Activated T-helper 1 cell treated with anti-CD3 and anti-CD28 coated beads, Interleukin-12 subunit alpha, Interleukin-12 subunit beta, Interleukin-2, Interleukin-4 antibody, amounts not matched to agents 30 ng/mL and 10 ng/mL and 1 ng/mL, durations not matched to agents 14 hours and 24 hours and 36 hours (primary cell): ENCODE measurements at regions of chr22 and their contacts with region 1.

Region 1: DNA sequence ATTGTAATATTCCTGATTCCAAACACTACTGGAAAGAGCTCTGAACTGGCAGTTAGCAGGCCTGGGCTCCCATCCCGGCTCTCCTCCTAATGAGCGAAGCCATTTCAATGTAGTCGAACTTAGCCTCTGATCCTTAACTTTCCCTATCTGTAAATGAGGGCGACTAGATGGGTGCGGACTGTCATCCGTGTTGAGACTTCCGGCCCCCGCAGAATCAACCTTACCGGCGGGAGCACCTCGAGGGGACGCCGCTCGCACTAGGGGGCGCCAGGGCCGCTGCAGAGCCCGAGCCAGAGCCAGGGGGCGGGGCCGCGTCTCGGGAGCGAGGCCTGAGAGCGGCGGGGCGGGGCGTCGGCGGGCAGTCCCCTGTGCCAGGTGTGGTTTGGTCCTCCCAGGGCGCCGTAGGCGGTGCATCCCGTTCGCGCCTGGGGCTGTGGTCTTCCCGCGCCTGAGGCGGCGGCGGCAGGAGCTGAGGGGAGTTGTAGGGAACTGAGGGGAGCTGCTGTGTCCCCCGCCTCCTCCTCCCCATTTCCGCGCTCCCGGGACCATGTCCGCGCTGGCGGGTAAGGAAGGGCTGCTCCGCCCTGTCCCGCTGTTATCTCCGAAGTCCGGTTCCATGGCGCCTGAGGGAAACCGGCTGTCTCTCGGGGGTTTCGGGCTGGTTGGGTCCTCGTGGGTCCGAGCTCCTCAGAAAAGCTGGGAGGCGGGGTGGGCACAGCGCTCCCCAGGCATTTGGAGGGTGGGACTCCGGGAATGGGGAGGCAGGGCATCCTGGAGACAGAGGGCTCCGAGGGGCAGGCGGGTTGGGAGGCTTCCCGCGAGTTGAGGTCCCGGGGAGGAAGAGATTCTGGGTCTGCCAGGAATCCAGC is at the start of gene LIMK2:
- DNase-seq: peak; percentile 95
- H3K4me3 Mint-ChIP-seq: peak within 1 kb of the TSS; percentile 89
- H3K27ac Mint-ChIP-seq: peak within 1 kb of the TSS; percentile 83
- H3K4me1 Mint-ChIP-seq: peaks cover 54% of the 10 kb centered on the region
- H3K27me3 Mint-ChIP-seq: no peaks in the 10 kb centered on the region
- total RNA-seq, gene LIMK2: 39.8 and 40.7 TPM in 2 replicates

Region 2: GRCh38 chr22:30667494-30668385 is 544.4 kb before region 1 on chr22 and contains the start of gene DUSP18:
- intact Hi-C with region 1: loop called (anchors 10 kb)
- DNase-seq: peak; percentile 92
- H3K4me3 Mint-ChIP-seq: peak within 1 kb of the TSS; percentile 93
- H3K27ac Mint-ChIP-seq: peak within 1 kb of the TSS; percentile 83
- H3K4me1 Mint-ChIP-seq: peaks cover 32% of the 10 kb centered on the region
- H3K27me3 Mint-ChIP-seq: peaks cover 7% of the 10 kb centered on the region
- total RNA-seq, gene DUSP18: 9.6 and 9.8 TPM in 2 replicates

Region 3: DNA sequence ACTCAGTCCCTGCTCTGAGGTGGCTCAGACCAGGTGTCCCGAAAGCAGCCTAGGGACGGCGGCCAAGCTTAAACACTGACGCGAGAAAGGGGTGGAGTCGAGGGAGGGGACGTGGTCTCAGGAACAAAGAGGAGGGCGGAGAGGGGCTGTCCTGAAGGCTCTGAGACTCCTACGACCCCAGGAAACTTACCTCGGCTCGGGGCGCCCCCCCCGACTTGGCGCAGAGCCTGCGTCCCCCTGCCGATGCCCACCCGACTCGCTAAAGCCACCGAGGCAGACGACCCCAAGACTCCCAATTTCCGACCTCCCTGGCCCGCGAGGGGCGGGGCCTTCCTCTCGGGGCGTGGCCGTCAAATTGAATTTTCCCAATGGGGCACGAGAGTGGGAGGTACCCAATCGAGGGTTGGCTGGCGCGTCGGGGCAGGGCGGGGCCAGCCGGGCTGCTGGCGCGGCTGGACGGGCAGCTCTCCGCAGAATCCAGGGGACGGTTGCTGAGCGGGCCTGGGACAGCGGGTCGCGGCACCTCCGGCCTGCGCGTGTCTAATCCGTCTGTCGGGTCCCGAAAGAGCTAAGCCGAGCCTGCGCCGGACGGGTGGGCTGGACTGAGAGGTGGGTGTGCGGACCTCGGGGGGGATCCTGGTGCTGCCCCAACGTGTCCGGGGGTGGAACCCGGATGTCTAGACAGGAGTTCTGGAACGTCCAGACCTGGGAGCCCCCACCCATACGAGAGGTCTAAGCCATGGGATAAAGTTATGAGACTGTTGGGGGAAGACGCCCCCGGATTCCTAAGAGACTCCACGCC is 131.0 kb before region 1 on chr22 and contains the start of gene SMTN:
- intact Hi-C with region 1: loop called (anchors 1 kb)
- DNase-seq: peak; percentile 84
- H3K4me3 Mint-ChIP-seq: peak within 1 kb of the TSS; percentile 92
- H3K27ac Mint-ChIP-seq: peak within 1 kb of the TSS; percentile 29
- H3K4me1 Mint-ChIP-seq: peaks cover 40% of the 10 kb centered on the region
- H3K27me3 Mint-ChIP-seq: no peaks in the 10 kb centered on the region
- total RNA-seq, gene SMTN: 10.2 and 13.7 TPM in 2 replicates

Region 4: GRCh38 chr22:31160328-31160978 is 51.6 kb before region 1 on chr22:
- intact Hi-C with region 1: loop called (anchors 1 kb)
- DNase-seq: peak; percentile 9
- H3K4me3 Mint-ChIP-seq: peak overlapping the region; percentile 100
- H3K27ac Mint-ChIP-seq: peak overlapping the region; percentile 95
- H3K4me1 Mint-ChIP-seq: peaks cover 42% of the 10 kb centered on the region
- H3K27me3 Mint-ChIP-seq: peaks cover 15% of the 10 kb centered on the region

Region 5: DNA sequence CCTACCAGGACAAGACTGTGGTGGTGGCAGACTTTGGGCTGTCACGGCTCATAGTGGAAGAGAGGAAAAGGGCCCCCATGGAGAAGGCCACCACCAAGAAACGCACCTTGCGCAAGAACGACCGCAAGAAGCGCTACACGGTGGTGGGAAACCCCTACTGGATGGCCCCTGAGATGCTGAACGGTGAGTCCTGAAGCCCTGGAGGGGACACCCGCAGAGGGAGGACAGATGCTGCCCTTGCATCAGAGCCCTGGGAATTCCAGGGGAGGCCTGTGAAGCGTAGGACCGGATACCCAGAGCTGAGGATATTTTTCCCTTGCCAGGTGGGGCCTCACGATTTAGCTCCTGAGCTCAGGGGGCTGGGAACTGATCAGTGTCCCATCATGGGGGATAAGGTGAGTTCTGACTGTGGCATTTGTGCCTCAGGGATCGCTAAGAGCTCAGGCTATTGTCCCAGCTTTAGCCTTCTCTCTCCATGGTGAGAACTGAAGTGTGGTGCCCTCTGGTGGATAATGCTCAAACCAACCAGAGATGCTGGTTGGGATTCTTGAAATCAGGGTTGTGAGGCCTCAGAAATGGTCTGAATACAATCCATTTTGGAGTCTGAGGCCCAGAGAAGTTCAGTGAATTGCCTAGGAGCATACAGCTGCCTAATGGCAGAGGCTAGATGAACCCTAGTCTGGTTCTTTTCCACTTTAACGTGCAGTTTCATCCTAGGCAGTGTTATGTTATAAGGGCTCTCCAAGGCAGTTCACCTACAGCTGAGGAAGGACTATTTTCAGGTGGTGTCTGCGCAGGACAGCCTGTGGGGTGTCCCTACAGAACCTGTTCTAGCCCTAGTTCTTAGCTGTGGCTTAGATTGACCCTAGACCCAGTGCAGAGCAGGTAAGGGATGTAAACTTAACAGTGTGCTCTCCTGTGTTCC is 60.7 kb after region 1 on chr22:
- intact Hi-C with region 1: loop called (anchors 1 kb)
- DNase-seq: peak; percentile 26
- H3K4me3 Mint-ChIP-seq: no peak overlapping the region
- H3K27ac Mint-ChIP-seq: peak overlapping the region; percentile 52
- H3K4me1 Mint-ChIP-seq: peaks cover 14% of the 10 kb centered on the region
- H3K27me3 Mint-ChIP-seq: no peaks in the 10 kb centered on the region

Region 6: DNA sequence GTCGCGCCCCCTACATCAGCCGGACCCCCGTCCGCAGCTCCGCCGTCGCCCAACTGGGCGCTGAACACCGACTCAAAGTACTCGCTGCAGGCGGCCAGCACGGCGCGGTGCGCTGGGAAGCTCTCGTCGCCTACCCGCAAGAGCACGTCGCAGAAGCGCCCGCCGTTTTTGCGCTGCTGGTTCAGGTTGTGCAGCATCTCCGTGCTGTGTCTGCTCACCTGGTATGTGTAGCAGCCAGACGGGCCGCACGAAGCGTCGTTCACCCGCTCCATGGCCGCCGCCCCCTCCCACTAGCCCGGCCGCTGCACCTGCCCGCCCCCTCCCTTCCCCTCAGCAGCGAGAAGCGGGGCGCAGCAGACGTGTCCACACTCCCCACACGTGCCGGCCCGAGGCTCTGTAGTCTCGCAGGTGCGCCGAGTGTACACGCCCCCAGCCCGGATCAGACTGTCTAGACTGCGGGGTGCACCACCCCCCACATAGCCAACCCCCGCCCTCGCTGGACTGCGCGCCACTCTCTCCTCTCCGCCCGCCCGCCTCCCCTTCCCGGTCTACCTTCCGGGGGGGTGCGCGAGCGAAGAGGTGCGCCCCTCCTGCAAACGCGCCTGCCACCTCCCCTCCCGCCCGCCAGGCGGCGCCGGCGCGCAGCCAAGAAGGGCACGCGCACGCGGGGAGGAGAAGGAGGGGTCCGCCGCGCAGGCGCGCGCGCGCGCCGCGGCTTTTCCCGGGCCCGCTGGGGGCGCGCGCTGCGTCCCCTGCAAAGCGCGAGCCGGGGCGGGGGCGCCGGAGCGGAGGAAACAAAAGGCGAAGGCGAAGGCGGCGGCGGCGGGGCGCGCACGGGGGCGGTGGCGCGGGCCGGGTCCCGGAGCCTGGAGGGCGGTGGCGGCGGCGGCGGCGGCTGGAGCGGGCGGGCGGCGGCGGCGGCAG is 133.5 kb after region 1 on chr22:
- intact Hi-C with region 1: loop called (anchors 1 kb)
- DNase-seq: peak; percentile 85
- H3K4me3 Mint-ChIP-seq: peak overlapping the region; percentile 87
- H3K27ac Mint-ChIP-seq: peak overlapping the region; percentile 89
- H3K4me1 Mint-ChIP-seq: peaks cover 48% of the 10 kb centered on the region
- H3K27me3 Mint-ChIP-seq: no peaks in the 10 kb centered on the region